BJ (cell line): ENCODE measurements at regions of chr6 and their contacts with region 1.

Region 1: GRCh38 chr6:34027445-34027936 is 118.4 kb downstream of the GRM4 start:
- DNase-seq: no peak
- H3K4me3 ChIP-seq: no peak overlapping the region
- H3K27me3 ChIP-seq: peaks cover 2% of the 10 kb centered on the region; the same call in 1 of the 2 replicates
- CTCF ChIP-seq: peak; percentile 94

Region 2: DNA sequence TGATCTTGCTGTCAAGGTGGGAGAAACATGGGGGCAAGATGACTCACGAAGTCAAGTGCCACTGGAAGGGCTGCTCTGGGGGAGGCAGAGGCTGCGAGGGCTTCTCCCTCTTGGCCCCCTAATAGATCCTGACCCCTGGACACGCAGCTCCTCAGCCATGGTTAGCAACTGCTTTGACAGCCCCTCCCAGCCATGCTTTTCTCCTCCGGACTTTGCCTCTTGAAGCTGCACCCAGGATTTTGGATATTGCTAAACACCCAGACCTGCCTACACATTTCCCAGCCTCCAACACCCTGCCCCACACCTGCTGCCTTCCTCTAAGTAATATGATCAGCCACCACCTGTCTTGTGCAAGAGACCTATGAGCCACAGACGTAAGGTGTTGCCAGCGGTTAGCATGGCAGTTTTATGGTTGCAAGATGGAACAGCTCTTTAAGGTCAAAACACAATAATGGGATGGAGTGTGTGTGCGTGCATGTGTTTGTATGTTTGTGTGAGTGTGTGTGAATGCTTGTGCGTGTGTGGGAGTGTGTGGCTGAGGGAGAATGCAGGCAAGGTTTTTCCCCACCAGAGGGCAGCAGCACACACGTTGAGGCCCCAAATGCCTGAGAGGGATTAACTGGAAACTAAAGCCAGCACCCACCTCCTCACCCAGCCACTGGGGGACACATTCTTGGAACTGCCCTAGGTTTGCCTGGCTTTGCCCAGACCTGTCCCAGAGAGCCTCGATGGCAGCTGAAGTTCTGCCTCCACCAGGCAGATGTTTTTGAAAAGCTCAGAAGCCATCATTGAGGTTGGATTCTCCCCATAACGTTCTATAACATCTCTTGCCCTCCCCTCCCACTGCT is 283.3 kb before region 1 on chr6:
- CTCF ChIA-PET with region 1: interaction called, 29 read pairs
- POLR2A ChIA-PET with region 1: no interaction called
- DNase-seq: no peak
- H3K4me3 ChIP-seq: no peak overlapping the region
- H3K27me3 ChIP-seq: no peaks in the 10 kb centered on the region
- CTCF ChIP-seq: peak; percentile 93

Region 3: GRCh38 chr6:33771146-33772081 is 256.1 kb before region 1 on chr6:
- CTCF ChIA-PET with region 1: interaction called, 184 read pairs
- POLR2A ChIA-PET with region 1: no interaction called
- DNase-seq: peak; percentile 96
- H3K4me3 ChIP-seq: no peak overlapping the region
- H3K27me3 ChIP-seq: no peaks in the 10 kb centered on the region
- CTCF ChIP-seq: peak; percentile 75

Region 4: GRCh38 chr6:33851959-33852358 is 175.5 kb before region 1 on chr6:
- CTCF ChIA-PET with region 1: interaction called, 16 read pairs
- POLR2A ChIA-PET with region 1: no interaction called
- DNase-seq: no peak
- H3K4me3 ChIP-seq: no peak overlapping the region
- H3K27me3 ChIP-seq: no peaks in the 10 kb centered on the region; the same call in 1 of the 2 replicates
- CTCF ChIP-seq: peak; percentile 67

Region 5: DNA sequence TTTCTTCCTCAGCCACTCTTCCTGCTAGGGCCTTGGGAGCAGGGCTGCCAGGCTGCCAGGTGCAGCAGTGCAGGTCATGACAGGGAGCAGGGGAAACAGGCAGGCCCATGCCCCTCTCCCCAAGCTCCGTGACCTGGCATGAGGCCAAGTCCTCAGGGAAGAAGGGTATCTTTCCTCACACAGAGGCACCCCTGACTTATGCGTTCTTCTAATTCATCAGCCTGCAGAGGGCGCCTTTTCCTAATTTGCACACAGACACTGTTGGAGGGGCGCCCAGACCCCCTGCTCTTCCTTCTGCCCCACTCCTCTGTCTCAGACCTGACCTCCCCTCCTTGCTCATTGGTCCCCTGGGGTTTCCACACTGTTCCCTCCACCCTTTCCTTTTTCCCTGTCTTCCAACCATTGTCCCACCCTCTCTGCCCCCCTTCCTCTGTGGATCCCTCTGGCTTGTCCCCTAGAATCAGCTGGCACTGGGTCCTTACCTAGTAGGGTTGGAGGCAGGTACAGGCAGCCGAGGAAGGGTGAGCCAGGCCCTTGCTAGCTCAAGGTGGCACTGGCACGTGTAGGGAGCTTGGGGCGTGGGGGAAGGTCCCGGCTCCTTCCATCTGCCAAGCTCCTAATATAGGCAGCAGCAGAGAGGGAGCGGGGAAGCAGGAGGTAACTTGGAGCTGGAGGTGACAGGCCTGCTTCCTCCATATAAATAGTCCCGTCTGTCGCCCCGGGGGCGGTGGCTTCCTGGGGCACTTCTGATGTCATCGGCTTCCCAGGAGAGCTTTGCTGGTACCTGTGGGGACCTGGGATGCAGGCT is 68.8 kb before region 1 on chr6:
- CTCF ChIA-PET with region 1: interaction called, 11 read pairs
- POLR2A ChIA-PET with region 1: no interaction called
- DNase-seq: no peak
- H3K4me3 ChIP-seq: no peak overlapping the region
- H3K27me3 ChIP-seq: peaks cover 2% of the 10 kb centered on the region; the same call in 1 of the 2 replicates
- CTCF ChIP-seq: peak; percentile 19

Region 6: GRCh38 chr6:34015586-34015985 is 11.9 kb before region 1 on chr6:
- CTCF ChIA-PET with region 1: interaction called, 13 read pairs
- POLR2A ChIA-PET with region 1: no interaction called
- DNase-seq: no peak
- H3K4me3 ChIP-seq: no peak overlapping the region
- H3K27me3 ChIP-seq: peaks cover 3% of the 10 kb centered on the region
- CTCF ChIP-seq: no peak

Region 7: DNA sequence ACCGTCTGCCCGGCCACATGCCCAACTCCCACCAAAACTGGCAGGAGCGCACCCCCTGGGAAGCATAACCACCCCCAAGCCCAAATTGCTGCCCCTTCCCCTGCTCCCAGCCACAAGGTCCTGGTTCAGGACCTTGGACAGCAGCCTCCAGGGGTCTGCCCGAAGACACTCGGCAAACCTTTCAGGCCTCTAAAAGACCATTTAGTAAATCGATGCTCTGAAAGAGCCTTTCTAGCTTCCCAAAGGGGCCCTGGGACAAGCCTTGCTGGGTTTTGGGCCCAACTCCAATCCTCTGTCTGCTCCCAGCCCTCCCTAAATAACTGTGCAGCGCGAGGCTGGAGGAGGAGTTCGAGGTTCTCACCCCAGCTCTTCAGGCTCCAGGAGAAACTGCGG is 87.9 kb after region 1 on chr6:
- CTCF ChIA-PET with region 1: no interaction called
- POLR2A ChIA-PET with region 1: no interaction called
- DNase-seq: no peak
- H3K4me3 ChIP-seq: no peak overlapping the region
- H3K27me3 ChIP-seq: peaks cover 2% of the 10 kb centered on the region
- CTCF ChIP-seq: no peak

Region 8: GRCh38 chr6:34154668-34155447 is 127.4 kb after region 1 on chr6:
- CTCF ChIA-PET with region 1: interaction called, 26 read pairs
- POLR2A ChIA-PET with region 1: no interaction called
- DNase-seq: no peak
- H3K4me3 ChIP-seq: peak overlapping the region; percentile 20; the same call in 1 of the 2 replicates
- H3K27me3 ChIP-seq: peaks cover 31% of the 10 kb centered on the region
- CTCF ChIP-seq: peak; percentile 73